Breast epithelium (tissue), 4 donors: ENCODE measurements at regions of chr1 and their contacts with region 1.

Region 1: GRCh38 chr1:214400131-214400530 is 119.2 kb downstream of the SMYD2 start:
- DNase-seq: no peak
- H3K4me3 ChIP-seq: no peak overlapping the region
- H3K27ac ChIP-seq: no peak overlapping the region
- H3K4me1 ChIP-seq: no peaks in the 10 kb centered on the region
- H3K27me3 ChIP-seq: no peaks in the 10 kb centered on the region
- CTCF ChIP-seq: no peak
- POLR2A ChIP-seq: no peak

Region 2: DNA sequence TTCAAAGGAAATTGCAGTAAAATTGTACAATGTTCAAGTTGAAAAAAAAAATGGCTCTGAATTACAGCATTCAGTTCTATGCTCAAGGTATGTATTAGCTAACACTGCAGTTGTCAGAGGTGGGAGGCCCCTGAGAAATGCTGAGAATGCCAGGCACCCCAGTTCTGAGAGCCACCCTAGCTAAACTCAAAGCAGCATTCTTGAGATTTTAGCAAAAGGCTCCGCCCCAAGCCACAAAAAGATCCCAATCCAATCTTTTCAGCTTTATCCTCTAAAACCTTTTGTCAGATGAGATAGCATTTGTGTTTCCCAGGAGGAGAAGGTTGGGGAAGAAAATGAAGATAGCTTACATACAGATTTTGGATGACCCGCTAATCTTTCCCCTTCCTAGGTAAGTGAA is 50.4 kb before region 1 on chr1:
- intact Hi-C with region 1: no loop called
- DNase-seq: no peak
- H3K4me3 ChIP-seq: no peak overlapping the region
- H3K27ac ChIP-seq: no peak overlapping the region
- H3K4me1 ChIP-seq: no peaks in the 10 kb centered on the region
- H3K27me3 ChIP-seq: no peaks in the 10 kb centered on the region
- CTCF ChIP-seq: no peak
- POLR2A ChIP-seq: no peak

Region 3: DNA sequence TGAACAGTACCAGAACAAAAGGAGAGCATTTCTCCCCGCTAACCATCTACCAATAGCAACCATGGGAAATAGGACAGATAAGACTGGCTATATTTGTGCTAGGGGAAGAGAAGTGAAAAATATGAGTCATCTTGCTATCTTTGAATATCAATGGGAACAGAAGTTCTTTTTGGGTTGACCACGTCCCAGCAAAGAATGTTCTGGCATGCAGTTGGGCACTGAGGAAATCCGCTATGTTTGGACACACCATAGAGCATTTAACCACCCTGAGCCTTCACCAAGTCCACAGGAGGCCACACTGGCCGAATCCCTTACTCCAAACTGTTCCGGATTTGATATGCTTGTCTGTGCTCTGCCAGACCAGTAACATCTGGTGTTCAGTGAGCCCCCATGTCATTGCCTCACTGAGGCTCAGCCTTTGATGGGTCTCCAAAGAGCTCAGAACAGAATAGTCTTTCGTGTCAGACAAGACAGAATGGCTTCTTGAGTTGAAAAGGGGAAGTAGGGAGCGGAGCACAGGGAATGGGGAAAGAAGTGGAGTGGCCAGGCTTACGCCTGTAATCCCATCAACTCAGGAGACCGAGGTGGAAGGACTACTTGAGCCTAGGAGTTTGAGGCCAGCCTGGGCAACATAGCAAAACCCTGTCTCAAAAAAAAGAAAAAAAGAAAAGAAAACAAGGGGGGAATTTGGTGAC is 37.8 kb before region 1 on chr1:
- intact Hi-C with region 1: loop called (anchors 1 kb)
- DNase-seq: no peak
- H3K4me3 ChIP-seq: no peak overlapping the region
- H3K27ac ChIP-seq: peak overlapping the region in 1 of 2 donors; percentile 1
- H3K4me1 ChIP-seq: no peaks in the 10 kb centered on the region
- H3K27me3 ChIP-seq: no peaks in the 10 kb centered on the region
- CTCF ChIP-seq: no peak
- POLR2A ChIP-seq: no peak

Region 4: DNA sequence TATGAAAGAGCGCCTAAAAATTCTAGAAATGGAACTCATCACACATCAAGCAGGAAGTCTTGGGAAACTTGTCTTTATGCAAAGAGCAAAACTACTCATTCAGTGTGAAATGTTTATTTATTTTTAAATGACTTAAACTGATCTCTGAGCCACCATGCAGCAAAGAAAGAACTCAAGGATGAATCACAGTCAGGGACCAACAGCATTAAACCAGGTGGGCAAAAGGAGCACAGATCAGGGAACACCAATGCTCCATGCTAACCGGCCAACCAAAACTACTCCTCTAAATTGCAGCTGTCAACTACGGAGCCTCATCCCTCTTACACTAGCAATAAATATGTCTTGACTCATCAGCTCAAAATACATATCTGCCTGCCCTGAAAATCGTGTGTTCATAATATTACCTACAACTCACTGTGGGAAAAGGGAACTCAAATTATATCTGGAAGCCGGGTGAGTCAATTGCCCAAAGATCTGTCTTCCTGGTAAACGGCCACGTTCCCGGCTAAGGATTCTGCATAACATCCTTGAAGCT is 22.1 kb after region 1 on chr1:
- intact Hi-C with region 1: no loop called
- DNase-seq: no peak
- H3K4me3 ChIP-seq: no peak overlapping the region
- H3K27ac ChIP-seq: no peak overlapping the region
- H3K4me1 ChIP-seq: no peaks in the 10 kb centered on the region
- H3K27me3 ChIP-seq: no peaks in the 10 kb centered on the region
- CTCF ChIP-seq: no peak
- POLR2A ChIP-seq: no peak